ENCODE measurements at regions of chr3 and their contacts with region 1.

Region 1: DNA sequence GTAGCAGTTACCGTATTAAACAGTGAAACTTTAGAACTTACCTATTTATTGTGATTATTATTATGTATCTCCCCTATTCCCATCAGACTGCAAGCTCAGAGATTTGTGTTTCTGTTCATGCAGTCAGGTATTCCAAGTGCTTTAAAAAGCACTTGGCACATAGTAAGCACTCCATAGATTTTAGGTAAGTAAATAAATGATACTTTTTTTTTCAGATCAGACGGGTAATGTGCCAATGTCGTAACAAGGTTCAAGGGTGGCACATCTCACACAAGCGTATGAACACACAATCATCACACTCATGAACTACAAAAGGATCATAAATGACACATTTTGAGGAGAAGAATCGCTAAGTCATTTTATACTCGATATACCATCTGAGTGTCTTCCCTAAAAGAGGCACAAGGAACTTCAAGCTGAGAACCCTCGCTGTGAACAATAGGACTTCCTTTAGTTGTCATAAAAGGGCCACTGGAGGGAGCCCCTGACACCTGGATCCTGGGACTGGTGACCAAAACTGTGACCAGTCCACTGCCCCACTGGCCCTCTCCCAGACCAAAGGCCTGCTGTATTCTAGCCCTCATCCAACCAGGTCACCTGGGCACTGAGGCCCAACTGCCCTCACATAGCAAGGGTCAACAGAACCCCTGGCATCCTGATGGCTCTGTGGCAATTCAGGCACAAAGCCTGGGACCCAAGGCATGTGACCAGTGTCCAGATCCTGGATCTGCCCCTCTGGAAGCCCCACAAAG is 32.1 kb downstream of the KIF9 start:
- DNase-seq: peak; percentile 62
- H3K4me3 ChIP-seq: no peak overlapping the region
- H3K4me3 Mint-ChIP-seq: no peak overlapping the region
- H3K27ac Mint-ChIP-seq: no peak overlapping the region
- H3K4me1 ChIP-seq: no peaks in the 10 kb centered on the region
- H3K4me1 Mint-ChIP-seq: no peaks in the 10 kb centered on the region
- H3K27me3 ChIP-seq: no peaks in the 10 kb centered on the region
- H3K27me3 Mint-ChIP-seq: no peaks in the 10 kb centered on the region
- CTCF ChIP-seq: peak; percentile 52 to 56

Region 2: GRCh38 chr3:47370887-47371697 is 120.6 kb after region 1 on chr3:
- CTCF ChIA-PET with region 1: no interaction called
- POLR2A ChIA-PET with region 1: no interaction called
- intact Hi-C with region 1: loop called (anchors 2 kb)
- DNase-seq: no peak
- H3K4me3 ChIP-seq: no peak overlapping the region
- H3K4me3 Mint-ChIP-seq: no peak overlapping the region
- H3K27ac Mint-ChIP-seq: no peak overlapping the region
- H3K4me1 ChIP-seq: no peaks in the 10 kb centered on the region
- H3K4me1 Mint-ChIP-seq: peaks cover 15% of the 10 kb centered on the region
- H3K27me3 ChIP-seq: no peaks in the 10 kb centered on the region
- H3K27me3 Mint-ChIP-seq: no peaks in the 10 kb centered on the region
- CTCF ChIP-seq: peak; percentile 31 to 51

Region 3: DNA sequence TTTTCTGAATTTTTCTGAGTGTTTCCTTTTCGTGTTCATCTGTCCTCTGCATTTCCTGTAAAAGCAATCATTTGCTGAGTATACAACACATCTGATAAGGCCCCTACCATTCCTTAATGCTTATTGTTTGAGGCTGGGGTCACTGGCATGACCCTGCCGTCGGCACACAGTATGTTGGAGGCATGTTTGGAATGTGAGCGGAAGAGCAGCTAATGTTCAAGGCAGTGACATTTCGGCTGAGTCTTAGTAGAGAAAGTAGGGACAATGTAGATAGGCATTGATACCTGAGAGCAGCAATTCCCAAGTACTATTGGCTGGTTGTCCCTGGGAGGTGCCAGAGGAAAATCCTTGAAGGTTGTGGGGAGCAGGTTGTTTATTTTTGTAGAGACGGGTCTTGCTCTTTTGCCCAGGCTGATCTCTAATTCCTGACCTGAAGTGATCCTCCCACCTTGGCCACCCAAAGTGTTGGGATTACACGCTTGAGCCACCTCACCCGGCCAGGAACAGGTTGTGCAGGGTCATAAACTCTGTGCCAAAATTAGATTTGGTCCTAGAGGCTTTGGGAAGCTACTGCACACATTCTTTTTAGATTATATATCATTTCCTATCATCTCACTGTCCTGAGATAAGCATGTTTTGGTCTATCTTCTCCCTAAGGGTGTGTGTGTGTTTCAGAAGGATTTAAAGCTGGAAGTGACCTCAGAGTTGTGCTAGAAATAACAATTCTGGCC is 143.8 kb after region 1 on chr3:
- CTCF ChIA-PET with region 1: no interaction called
- POLR2A ChIA-PET with region 1: no interaction called
- intact Hi-C with region 1: no loop called
- DNase-seq: peak; percentile 82 to 87
- H3K4me3 ChIP-seq: peak overlapping the region; percentile 5; the same call in 1 of the 2 replicates
- H3K4me3 Mint-ChIP-seq: peak overlapping the region; percentile 69
- H3K27ac Mint-ChIP-seq: peak overlapping the region; percentile 90
- H3K4me1 ChIP-seq: peaks cover 33% of the 10 kb centered on the region
- H3K4me1 Mint-ChIP-seq: peaks cover 17% of the 10 kb centered on the region
- H3K27me3 ChIP-seq: no peaks in the 10 kb centered on the region
- H3K27me3 Mint-ChIP-seq: no peaks in the 10 kb centered on the region
- CTCF ChIP-seq: peak in 1 of 2 experiments; percentile 42

Measured in Caco-2 (cell line).